ENCODE measurements at regions of chr12 and their contacts with region 1.

Region 1: GRCh38 chr12:45615268-45615667 is 114.2 kb upstream of the ARID2 start:
- DNase-seq: peak; percentile 81
- ATAC-seq: peak; percentile 94
- H3K4me3 ChIP-seq: no peak overlapping the region
- H3K27ac ChIP-seq: no peak overlapping the region
- H3K4me1 ChIP-seq: peaks cover 3% of the 10 kb centered on the region; the same call in 1 of the 2 replicates
- H3K27me3 ChIP-seq: peaks cover 2% of the 10 kb centered on the region; the same call in 1 of the 2 replicates
- CTCF ChIP-seq: no peak
- POLR2A ChIP-seq: no peak
- RAD21 ChIP-seq: no peak

Region 2: DNA sequence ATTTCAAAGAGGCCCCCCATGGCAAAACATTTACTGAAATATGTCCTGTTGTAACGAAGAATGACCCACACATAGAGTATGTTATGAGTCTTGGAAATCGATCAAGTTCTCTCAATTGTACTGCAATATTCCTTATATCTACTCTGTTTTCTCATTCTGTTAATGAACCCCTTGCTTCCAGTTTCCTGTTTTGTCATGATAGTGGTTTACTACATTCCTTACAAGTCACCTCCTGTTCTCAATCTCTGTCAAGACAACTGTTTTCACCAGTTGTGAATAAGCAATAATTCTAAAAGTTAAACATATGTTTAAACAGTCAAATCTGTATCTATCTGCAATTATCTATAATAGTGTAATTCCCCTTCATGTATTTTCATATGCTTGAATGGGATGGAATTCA is 97.8 kb after region 1 on chr12:
- CTCF ChIA-PET with region 1: no interaction called
- POLR2A ChIA-PET with region 1: interaction called, 14 read pairs
- dilution Hi-C with region 1: no loop called
- in situ Hi-C with region 1: no loop called
- intact Hi-C with region 1: no loop called
- DNase-seq: peak; percentile 51
- ATAC-seq: peak; percentile 32; the same call in 1 of the 2 replicates
- H3K4me3 ChIP-seq: no peak overlapping the region
- H3K27ac ChIP-seq: no peak overlapping the region
- H3K4me1 ChIP-seq: no peaks in the 10 kb centered on the region
- H3K27me3 ChIP-seq: no peaks in the 10 kb centered on the region
- CTCF ChIP-seq: no peak
- POLR2A ChIP-seq: no peak
- RAD21 ChIP-seq: no peak

Region 3: GRCh38 chr12:47139000-47139681 is 1523.9 kb after region 1 on chr12:
- CTCF ChIA-PET with region 1: no interaction called
- POLR2A ChIA-PET with region 1: no interaction called
- dilution Hi-C with region 1: no loop called
- in situ Hi-C with region 1: no loop called
- intact Hi-C with region 1: loop called (anchors 5 kb)
- DNase-seq: no peak
- ATAC-seq: no peak
- H3K4me3 ChIP-seq: no peak overlapping the region
- H3K27ac ChIP-seq: no peak overlapping the region
- H3K4me1 ChIP-seq: peaks cover 5% of the 10 kb centered on the region; the same call in 1 of the 2 replicates
- H3K27me3 ChIP-seq: no peaks in the 10 kb centered on the region
- CTCF ChIP-seq: no peak
- POLR2A ChIP-seq: no peak
- RAD21 ChIP-seq: no peak

Measured in IMR-90 (cell line).